Dendritic cell treated with granulocyte-macrophage colony-stimulating factor and Interleukin-4, amounts not matched to agents 40 ng/mL and 50 ng/mL, for 4 days (primary cell): ENCODE measurements at regions of chr6 and their contacts with region 1.

Region 1: GRCh38 chr6:135851442-135852271 is at the start of gene PDE7B:
- H3K4me3 Mint-ChIP-seq: peak within 1 kb of the TSS; percentile 67
- H3K27ac Mint-ChIP-seq: peak within 1 kb of the TSS; percentile 82
- H3K4me1 Mint-ChIP-seq: peaks cover 11% of the 10 kb centered on the region
- H3K27me3 Mint-ChIP-seq: no peaks in the 10 kb centered on the region

Region 2: DNA sequence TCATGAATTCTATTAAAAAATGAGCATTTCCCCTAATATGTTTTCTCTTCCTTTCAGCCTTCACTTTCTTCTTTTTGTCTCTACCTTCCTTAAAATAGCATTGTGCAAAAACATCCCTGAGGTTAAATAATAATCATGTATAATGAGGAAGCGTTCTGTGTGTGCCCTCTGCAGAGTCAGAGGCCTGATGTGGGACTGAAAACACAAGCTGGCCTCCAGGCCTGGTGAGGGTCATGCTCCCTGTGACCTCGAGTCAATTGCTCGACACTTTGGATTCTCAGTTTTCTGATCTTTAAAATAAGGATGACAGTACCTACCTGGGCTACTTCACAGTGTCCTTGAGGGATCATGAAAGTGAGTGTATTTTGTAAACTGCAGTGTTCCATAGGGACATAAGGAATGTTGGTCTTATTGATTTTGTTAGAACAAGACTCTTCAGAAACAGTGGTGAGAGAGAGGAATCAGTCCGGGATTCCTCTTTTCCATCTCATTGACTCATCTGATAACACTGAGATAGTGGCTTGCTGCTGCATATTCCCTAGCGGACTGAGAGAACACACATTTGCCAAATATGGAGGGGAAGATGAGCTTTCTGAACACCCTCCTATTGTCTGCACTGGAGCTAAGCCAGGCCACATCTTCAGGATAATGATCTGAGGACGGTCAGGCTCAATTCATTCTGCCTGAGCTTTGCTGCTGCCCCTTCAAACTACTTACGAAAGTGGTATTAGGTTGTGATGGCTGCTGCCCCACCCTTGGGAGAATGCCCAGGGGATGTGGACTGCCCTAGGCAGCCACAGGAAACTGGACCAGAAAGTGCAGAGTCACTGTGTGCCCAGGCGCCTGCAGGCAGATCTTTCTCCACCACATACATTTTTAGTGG is 39.8 kb before region 1 on chr6:
- intact Hi-C with region 1: loop called (anchors 5 kb)
- H3K4me3 Mint-ChIP-seq: no peak overlapping the region
- H3K27ac Mint-ChIP-seq: no peak overlapping the region
- H3K4me1 Mint-ChIP-seq: peaks cover 20% of the 10 kb centered on the region
- H3K27me3 Mint-ChIP-seq: peaks cover 7% of the 10 kb centered on the region